ENCODE measurements at regions of chr2 and their contacts with region 1.

Region 1: GRCh38 chr2:133844214-133844892 is 276.1 kb upstream of the NCKAP5 start:
- DNase-seq: peak; percentile 88
- H3K4me3 ChIP-seq: no peak overlapping the region
- H3K27ac ChIP-seq: no peak overlapping the region
- H3K4me1 ChIP-seq: peaks cover 41% of the 10 kb centered on the region
- H3K27me3 ChIP-seq: no peaks in the 10 kb centered on the region
- CTCF ChIP-seq: peak; percentile 94

Region 2: DNA sequence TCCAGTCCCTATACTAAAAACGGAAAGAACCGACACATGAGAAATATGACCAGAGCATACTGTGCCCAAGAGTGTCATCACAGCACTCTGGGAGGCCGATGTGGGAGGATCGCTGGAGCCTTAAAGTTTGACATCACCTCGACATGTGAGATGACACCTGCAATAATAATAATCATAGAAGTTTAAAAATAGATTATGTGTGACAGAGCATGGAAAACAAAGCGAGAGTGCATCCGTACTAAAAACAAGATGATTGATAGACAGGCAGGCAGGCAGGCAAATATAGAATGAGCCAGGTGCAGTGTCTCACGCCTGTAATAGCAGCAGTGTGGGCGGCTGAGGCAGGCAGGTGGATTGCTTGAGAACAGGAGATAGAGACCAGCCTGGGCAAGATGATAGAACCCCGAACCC is 1567.8 kb before region 1 on chr2:
- CTCF ChIA-PET with region 1: no interaction called
- POLR2A ChIA-PET with region 1: no interaction called
- intact Hi-C with region 1: loop called (anchors 10 kb)
- DNase-seq: peak; percentile 58
- H3K4me3 ChIP-seq: no peak overlapping the region
- H3K27ac ChIP-seq: peak overlapping the region; percentile 88
- H3K4me1 ChIP-seq: peaks cover 7% of the 10 kb centered on the region
- H3K27me3 ChIP-seq: no peaks in the 10 kb centered on the region
- CTCF ChIP-seq: no peak

Region 3: DNA sequence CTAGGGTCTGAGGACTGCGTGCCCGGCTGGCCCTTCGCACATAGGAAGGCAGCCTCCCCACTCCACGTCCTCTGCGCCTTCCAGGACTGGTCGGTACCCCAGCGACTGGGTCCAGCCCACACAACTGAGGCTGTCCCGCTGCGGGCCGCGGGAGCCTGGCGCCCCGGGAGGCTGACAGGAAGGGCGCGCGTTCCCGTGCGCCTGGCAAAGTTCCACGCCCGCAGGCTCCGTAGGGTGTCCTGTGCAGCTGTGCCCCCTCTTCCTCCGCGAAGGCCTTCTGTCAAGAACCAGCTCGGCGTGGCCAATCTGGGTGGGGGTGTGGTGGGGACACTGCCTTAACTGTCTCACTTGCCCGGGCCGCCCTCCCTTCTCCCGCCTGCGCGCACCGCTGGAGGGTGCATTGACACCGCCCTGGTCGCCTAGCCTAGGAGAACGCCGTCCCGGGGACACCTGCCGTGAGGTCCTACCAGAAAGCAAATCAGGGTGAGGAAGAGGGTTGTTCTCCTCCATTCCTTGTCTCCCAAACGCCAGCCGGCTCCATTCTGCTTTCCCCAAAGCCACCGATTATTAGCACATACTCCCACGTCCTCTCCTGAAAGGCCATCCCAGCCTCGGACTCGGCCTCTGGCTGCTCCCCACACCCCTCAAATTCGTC is 1173.7 kb before region 1 on chr2:
- CTCF ChIA-PET with region 1: interaction called, 4 read pairs
- POLR2A ChIA-PET with region 1: no interaction called
- intact Hi-C with region 1: loop called (anchors 10 kb)
- DNase-seq: peak; percentile 55
- H3K4me3 ChIP-seq: peak overlapping the region; percentile 68
- H3K27ac ChIP-seq: peak overlapping the region; percentile 21
- H3K4me1 ChIP-seq: peaks cover 38% of the 10 kb centered on the region
- H3K27me3 ChIP-seq: no peaks in the 10 kb centered on the region
- CTCF ChIP-seq: no peak

Region 4: DNA sequence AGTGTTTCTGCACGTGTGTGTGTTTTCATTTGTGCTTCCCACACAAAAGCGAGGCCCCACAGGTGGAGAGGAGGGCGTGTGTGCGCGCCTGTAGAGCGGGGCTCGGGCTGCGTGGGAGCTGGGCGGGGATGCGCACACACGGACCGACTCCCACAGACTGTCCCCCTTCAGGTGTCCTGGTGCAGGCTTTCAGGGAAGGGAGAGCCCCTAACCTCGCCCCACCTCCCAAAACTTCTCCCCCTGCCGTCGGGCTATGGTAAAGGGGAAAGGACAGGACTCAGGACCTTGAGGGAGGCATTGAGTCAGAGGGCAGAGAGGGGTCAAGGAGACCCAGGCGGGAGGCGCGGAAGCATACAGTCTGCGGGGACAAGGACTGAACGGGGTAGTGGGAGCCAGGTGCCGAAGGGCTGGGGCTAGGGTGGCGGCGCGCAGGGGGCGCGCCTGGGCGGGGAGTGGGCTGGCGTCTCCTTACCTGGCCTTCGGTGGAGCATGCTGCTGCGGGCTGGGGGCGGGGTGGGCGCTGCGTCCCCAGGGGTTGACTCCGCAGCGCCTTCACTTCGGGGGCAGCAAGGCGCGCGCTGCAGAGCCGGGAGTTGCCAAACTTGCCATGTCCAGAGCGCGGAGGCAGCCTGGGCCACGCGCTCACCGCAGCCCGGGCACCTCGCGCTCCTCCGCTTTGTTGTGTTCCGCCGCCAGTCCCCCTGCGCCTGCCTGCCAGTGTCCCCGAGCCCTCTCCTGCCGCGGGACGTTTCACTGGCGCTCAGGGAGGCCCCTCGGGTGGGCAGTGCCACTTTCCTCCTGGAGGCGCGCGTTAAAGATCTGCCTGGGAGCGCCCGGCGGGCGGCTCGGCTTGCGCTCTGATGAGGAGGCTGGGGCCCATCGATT is 578.1 kb before region 1 on chr2:
- CTCF ChIA-PET with region 1: interaction called, 3 read pairs
- POLR2A ChIA-PET with region 1: no interaction called
- intact Hi-C with region 1: loop called (anchors 5 kb)
- DNase-seq: peak; percentile 69
- H3K4me3 ChIP-seq: peak overlapping the region; percentile 81
- H3K27ac ChIP-seq: peak overlapping the region; percentile 81
- H3K4me1 ChIP-seq: peaks cover 50% of the 10 kb centered on the region
- H3K27me3 ChIP-seq: no peaks in the 10 kb centered on the region
- CTCF ChIP-seq: peak; percentile 47

Region 5: GRCh38 chr2:133498662-133499585 is 345.4 kb before region 1 on chr2:
- CTCF ChIA-PET with region 1: interaction called, 3 read pairs
- POLR2A ChIA-PET with region 1: no interaction called
- intact Hi-C with region 1: loop called (anchors 5 kb)
- DNase-seq: no peak
- H3K4me3 ChIP-seq: no peak overlapping the region
- H3K27ac ChIP-seq: peak overlapping the region; percentile 99
- H3K4me1 ChIP-seq: peaks cover 91% of the 10 kb centered on the region
- H3K27me3 ChIP-seq: no peaks in the 10 kb centered on the region
- CTCF ChIP-seq: no peak

Region 6: DNA sequence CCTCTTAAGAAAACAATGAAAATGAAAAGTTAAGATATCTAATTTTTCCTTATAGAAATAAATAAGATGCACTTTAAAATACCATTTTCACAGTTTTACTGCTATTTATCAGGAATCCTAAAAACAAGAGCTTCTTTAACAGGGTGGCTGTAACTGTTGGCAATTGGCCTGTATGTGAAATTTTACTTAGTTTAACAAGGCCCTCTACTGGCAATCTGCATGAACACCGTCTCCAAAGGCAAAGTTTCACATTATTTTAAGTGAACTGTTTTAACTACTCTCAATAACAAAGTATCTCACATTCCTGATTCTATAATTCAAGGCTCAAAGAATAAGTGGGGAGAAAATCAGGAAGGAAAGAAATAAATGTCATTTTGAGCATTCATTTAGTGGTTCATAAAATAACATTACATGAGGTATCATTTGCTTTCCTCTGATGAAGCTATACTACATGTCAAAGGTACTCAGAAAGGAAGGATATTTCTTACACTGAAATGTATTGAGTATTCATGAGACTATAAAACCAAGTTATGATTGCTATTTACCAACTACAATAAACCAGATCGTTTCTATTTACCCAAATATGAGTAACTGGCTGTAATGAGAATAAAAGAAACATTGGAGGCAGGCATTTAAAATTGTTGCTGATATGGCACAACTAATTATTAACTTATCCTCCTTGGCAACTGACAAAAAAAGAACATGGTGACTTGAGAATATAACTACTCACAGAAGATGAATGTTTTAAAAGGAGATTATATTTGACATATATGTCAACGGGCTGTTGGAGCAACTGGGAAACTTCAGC is 283.1 kb before region 1 on chr2:
- CTCF ChIA-PET with region 1: interaction called, 4 read pairs
- POLR2A ChIA-PET with region 1: no interaction called
- intact Hi-C with region 1: loop called (anchors 2 kb)
- DNase-seq: peak; percentile 91
- H3K4me3 ChIP-seq: no peak overlapping the region
- H3K27ac ChIP-seq: peak overlapping the region; percentile 69
- H3K4me1 ChIP-seq: peaks cover 64% of the 10 kb centered on the region
- H3K27me3 ChIP-seq: no peaks in the 10 kb centered on the region
- CTCF ChIP-seq: peak; percentile 89

Measured in A673 (cell line).